ENCODE measurements at regions of chr22 and their contacts with region 1.

Region 1: GRCh38 chr22:34866495-34867131 is 199.3 kb upstream of the ISX start:
- DNase-seq: no peak

Region 2: DNA sequence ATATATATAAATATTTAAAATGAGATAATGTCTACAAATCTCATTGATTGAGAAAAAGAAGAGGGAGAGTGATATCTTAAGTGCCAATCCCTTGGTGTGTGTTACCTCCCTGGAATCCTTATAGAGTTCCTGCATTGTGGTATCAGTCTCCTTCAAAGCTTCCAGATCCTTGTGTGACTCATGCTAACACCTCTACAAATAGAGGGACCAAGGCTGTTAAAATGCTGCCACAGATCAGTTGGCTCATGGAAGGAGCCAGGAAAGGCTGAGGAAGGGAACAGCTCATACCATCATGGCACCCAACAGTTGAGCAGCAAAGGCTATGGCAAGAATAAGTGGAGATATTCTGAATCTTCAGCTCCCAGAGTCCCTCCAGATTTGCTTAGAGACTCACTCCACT is 35.7 kb after region 1 on chr22:
- intact Hi-C with region 1: loop called in 1 of 2 experiments (anchors 2 kb)
- DNase-seq: no peak

Region 3: GRCh38 chr22:34966980-34967565 is 100.5 kb after region 1 on chr22:
- intact Hi-C with region 1: no loop called
- DNase-seq: no peak

Region 4: GRCh38 chr22:35043252-35043931 is 176.8 kb after region 1 on chr22:
- intact Hi-C with region 1: no loop called
- DNase-seq: no peak

Measured in posterior vena cava (tissue), 2 donors.